ENCODE measurements at regions of chr3 and their contacts with region 1.

Region 1: DNA sequence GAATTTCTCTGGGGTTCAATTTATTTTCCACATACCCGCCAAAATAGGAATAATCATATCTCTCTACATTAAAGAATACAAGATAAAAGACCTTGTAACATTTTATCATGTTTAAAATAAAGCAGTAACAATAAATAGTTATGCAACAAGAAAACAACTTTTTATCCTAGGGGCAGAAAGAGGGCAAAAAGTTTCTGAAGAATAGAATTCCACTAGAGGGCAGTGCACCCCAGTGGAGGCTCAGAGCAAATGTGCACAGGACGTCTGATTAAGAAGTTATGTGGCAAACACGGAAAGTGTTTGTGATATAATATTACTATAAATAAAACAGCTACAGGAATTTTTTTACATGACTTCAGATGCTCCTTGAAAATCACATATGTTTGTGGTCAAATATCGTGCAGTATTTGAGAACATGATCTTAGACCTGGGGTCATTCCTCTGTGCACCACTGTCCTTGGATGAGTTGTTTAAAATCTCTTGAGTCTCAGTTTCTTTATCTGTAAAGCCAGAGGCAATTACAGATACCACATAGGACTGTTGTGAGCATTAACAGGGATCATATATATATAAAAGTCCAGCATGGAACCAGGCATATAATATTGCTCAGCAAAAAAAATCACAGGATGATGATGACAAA is 13.2 kb upstream of the PIK3R4 start:
- ATAC-seq: peak in 7 of 8 experiments; percentile 42 to 84 (median 64)
- H3K4me3 ChIP-seq: no peak overlapping the region
- H3K27ac ChIP-seq: no peak overlapping the region
- H3K4me1 ChIP-seq: no peaks in the 10 kb centered on the region

Region 2: DNA sequence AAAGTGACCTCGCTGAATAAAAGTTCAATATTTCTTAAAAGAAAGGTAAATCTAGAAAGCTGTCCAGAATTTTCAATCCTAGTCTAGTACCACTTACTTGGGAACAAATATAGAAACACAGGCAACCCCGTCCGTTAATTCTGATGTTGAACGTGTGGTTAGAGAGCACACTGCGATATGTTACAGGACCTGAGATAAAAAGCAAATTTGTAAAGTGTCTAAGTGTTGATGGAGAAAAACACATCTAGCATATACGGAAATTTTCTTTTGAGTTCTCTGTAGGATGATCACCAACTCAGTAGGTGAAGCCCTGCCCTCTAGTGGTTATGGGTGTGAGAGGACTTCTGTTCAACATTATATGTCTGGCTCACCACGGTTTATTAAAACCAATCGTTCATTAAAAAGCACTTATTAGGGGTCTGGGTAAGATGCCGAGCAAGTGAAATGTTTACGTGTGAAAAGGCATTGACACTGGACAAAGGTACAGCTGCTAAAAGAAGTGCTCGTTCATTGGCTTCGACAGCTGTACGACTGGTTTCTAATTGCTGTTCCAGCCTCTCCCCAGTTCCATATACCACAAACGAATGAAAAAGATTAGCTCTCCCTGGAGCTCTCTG is 133.0 kb after region 1 on chr3:
- in situ Hi-C with region 1: loop called in 5 of 9 experiments (anchors 10 to 25 kb)
- ATAC-seq: peak; percentile 0 to 33 (median 6)
- H3K4me3 ChIP-seq: peak overlapping the region; percentile 66 to 96 (median 84)
- H3K27ac ChIP-seq: peak overlapping the region; percentile 91 to 92
- H3K4me1 ChIP-seq: peaks cover 2 to 20% of the 10 kb centered on the region in 2 donors